Activated naive CD4-positive, alpha-beta T cell treated with anti-CD3 and anti-CD28 coated beads for 36 hours (primary cell): ENCODE measurements at regions of chr3 and their contacts with region 1.

Region 1: DNA sequence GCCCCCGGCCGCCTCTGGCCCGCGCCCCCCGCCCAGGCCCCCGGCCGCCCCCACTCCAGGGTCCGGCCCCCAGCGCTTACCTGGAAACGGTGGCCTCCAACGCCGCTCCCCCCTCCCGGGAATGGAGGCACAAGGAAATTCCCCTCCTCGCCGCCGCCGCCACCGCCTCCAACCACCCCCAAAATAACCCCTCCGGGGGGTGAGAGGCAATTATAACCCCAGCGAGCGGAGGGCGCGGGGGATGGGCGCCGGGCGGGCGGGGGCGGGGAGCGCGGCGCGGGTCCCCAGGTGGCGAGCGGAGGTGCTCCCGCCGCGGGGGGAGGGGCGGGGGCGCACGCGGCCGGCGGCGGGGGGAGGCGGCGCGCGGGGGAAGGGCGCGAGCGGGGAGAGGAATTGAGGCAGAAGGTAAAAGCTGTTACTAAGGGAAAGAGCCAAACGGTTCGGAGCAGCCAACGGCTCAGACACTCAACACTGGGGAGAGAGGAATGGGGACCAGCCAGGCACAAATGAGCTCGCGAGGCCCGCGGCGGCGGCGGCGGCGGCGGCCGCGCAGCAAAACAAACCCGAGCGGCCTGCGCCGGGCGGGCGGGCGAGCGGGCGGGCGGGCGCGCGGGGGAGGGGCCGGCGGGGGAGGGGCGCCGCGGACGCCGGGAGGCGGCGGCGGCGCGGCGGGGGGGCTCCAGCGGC is at the start of gene TBL1XR1:
- DNase-seq: peak; percentile 84
- H3K4me3 Mint-ChIP-seq: peak within 1 kb of the TSS; percentile 96
- H3K27ac Mint-ChIP-seq: peak within 1 kb of the TSS; percentile 99
- H3K4me1 Mint-ChIP-seq: peaks cover 62% of the 10 kb centered on the region
- H3K27me3 Mint-ChIP-seq: no peaks in the 10 kb centered on the region
- total RNA-seq, gene TBL1XR1: 149 to 162 TPM

Region 2: DNA sequence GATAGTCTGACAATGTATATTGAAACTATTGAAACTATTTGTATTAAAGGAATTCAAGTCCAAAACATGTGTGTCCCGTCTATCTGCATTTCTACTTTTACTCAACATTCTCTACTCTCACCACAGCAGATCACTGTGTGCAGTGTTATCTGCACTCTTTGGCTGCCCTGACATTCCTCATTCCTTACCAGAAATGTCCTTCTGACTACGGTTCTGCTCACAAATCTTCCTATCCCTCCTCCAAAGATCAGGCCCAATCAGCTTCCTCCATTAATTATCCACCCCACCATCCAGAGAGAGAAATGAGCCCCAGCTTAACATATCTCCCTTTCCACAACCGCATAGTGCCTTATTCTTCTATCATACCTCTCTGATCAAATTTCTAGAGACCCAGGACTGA is 94.6 kb before region 1 on chr3:
- CTCF ChIA-PET with region 1: no interaction called
- intact Hi-C with region 1: no loop called
- DNase-seq: no peak
- H3K4me3 Mint-ChIP-seq: no peak overlapping the region
- H3K27ac Mint-ChIP-seq: no peak overlapping the region
- H3K4me1 Mint-ChIP-seq: peaks cover 38% of the 10 kb centered on the region
- H3K27me3 Mint-ChIP-seq: no peaks in the 10 kb centered on the region

Region 3: GRCh38 chr3:177114253-177114652 is 82.9 kb before region 1 on chr3:
- CTCF ChIA-PET with region 1: no interaction called
- intact Hi-C with region 1: no loop called
- DNase-seq: no peak
- H3K4me3 Mint-ChIP-seq: no peak overlapping the region
- H3K27ac Mint-ChIP-seq: no peak overlapping the region
- H3K4me1 Mint-ChIP-seq: peaks cover 64% of the 10 kb centered on the region
- H3K27me3 Mint-ChIP-seq: no peaks in the 10 kb centered on the region

Region 4: DNA sequence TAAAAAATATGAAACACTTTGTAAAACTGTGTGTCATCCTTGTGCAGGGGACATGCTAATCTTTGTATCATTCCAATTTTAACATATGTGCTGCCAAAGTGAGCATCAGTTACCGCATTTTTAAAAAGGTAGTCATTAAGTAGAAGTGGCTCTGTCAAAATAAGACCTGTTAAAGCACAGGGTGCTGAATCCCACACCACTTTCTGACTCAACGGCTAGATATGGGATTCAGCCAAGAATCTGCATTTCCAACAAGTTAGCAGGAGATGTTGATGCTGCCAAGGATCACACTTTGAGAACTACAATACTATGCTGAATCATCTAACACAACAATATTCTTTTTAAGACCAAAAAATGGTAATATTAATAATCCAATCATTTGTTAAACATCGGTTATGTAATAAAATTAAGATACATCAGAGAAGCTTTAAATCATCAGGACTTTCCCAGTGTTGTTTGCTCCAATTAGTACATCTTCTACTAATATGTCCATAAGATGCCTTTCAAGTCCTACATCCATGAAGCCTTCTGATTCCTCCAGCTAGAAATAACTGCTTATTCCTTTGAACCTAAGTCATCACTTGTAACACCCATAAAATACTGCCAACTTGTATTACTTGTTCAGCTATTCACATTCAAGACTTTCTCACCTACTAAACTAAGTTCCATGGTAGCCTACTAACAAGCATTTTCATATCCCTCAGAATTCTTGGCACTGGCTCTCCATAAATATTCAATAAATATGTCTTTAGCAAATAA is 71.0 kb before region 1 on chr3:
- CTCF ChIA-PET with region 1: no interaction called
- intact Hi-C with region 1: loop called (anchors 5 kb)
- DNase-seq: no peak
- H3K4me3 Mint-ChIP-seq: no peak overlapping the region
- H3K27ac Mint-ChIP-seq: no peak overlapping the region
- H3K4me1 Mint-ChIP-seq: peaks cover 76% of the 10 kb centered on the region
- H3K27me3 Mint-ChIP-seq: no peaks in the 10 kb centered on the region

Region 5: DNA sequence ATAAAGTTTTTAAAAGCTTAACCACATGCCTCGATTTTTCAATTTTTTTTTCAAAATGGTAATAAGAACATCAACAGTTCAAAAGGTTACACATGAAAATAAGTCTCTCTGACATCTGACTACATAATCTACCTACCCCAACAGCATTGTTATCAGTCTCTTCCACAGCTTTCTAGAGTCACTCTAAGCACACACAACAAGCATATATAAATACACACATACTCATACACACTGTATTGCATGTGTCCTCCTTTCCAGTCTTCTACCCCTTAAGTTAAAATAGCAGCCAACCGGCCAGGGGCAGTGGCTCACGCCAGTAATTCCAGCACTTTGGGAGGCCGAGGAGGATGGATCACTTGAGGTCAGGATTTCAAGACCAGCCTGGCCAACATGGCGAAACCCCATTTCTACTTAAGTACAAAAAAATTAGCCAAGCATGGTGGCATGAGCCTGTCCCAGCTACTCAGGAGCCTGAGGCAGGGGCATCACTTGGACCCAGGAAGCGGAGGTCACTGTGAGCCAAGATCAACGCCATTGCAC is 12.1 kb before region 1 on chr3:
- CTCF ChIA-PET with region 1: interaction called, 4 read pairs
- intact Hi-C with region 1: loop called (anchors 1 kb)
- DNase-seq: no peak
- H3K4me3 Mint-ChIP-seq: no peak overlapping the region
- H3K27ac Mint-ChIP-seq: peak overlapping the region; percentile 15
- H3K4me1 Mint-ChIP-seq: peaks cover 58% of the 10 kb centered on the region
- H3K27me3 Mint-ChIP-seq: no peaks in the 10 kb centered on the region

Region 6: DNA sequence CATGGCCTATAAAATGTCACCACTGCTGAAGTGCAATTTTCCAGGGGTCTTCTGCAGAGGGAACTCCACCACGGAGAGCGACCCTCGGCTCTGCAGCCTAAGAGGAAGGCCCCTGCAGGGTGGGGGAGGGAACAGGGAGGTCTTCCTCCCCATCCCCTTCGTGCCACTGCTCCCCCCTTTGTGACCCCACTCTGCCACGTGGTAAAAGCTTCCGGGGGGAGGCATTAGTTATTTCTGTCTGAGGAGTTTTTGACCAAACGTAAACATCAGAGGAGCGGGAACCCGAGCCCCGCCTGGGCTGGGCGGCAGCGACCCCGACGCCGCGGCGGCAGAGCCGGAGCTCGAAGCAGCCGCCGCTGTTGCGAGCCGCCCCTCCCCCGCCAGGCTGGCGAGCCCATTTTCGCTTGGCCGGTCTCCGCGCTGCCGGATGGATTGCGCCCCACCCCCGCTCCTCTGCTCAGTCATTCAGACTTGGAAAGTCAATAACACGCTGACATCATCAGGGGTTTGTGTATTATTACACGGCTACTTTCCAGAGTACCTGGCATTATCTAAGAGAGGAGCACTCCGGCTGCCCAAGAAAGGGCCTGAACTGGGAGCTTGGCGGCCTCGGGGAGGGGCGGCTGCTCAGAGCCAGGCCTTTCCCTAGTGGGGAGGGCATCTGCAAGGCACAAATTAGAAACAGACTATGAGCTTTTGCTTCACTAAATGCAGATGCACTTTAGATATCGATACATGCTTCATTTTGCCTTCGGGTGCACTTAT is 162.6 kb after region 1 on chr3:
- CTCF ChIA-PET with region 1: interaction called, 7 read pairs
- intact Hi-C with region 1: loop called (anchors 1 kb)
- DNase-seq: peak; percentile 95
- H3K4me3 Mint-ChIP-seq: peak overlapping the region; percentile 72
- H3K27ac Mint-ChIP-seq: peak overlapping the region; percentile 94
- H3K4me1 Mint-ChIP-seq: peaks cover 54% of the 10 kb centered on the region
- H3K27me3 Mint-ChIP-seq: no peaks in the 10 kb centered on the region

Region 7: DNA sequence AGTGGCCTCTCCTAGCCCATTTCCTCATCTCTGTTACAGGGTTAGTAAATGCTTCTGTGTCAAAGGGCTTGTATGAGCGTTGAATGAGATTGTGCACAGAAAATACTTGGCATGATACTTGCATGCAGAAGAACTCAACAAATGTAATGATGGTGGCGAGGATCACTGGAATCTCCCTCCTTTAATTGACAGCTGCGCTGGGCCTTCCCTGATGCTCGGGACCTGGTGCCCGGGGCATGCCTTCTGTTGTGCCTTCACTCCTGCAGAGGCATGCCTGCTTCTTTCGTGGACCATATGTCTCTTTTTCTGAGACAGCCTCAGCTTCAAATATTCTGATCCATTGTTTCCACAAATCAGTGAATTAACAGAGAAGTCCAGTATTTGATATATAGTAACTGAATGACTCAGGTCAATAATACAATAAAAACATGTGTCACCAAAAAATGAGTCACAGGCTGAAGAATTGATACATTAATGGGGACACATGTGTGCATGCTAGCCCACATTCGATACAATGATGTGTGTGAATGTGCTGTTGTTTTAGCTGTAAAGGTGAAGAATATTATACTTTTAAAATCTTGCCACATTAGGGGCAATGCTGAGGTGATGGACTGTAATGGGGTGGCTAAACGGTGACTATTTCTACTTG is 243.4 kb after region 1 on chr3:
- CTCF ChIA-PET with region 1: no interaction called
- intact Hi-C with region 1: no loop called
- DNase-seq: no peak
- H3K4me3 Mint-ChIP-seq: no peak overlapping the region
- H3K27ac Mint-ChIP-seq: no peak overlapping the region
- H3K4me1 Mint-ChIP-seq: no peaks in the 10 kb centered on the region
- H3K27me3 Mint-ChIP-seq: no peaks in the 10 kb centered on the region

Region 8: GRCh38 chr3:177538750-177539730 is 341.9 kb after region 1 on chr3:
- CTCF ChIA-PET with region 1: no interaction called
- intact Hi-C with region 1: loop called (anchors 5 kb)
- DNase-seq: peak; percentile 22
- H3K4me3 Mint-ChIP-seq: peak overlapping the region; percentile 32
- H3K27ac Mint-ChIP-seq: peak overlapping the region; percentile 48
- H3K4me1 Mint-ChIP-seq: peaks cover 27% of the 10 kb centered on the region
- H3K27me3 Mint-ChIP-seq: no peaks in the 10 kb centered on the region

Region 9: GRCh38 chr3:177787279-177788041 is 590.3 kb after region 1 on chr3:
- CTCF ChIA-PET with region 1: no interaction called
- intact Hi-C with region 1: loop called (anchors 2 kb)
- DNase-seq: peak; percentile 36
- H3K4me3 Mint-ChIP-seq: no peak overlapping the region
- H3K27ac Mint-ChIP-seq: peak overlapping the region; percentile 65
- H3K4me1 Mint-ChIP-seq: peaks cover 29% of the 10 kb centered on the region
- H3K27me3 Mint-ChIP-seq: no peaks in the 10 kb centered on the region